Right lobe of liver (tissue), 6 donors: ENCODE measurements at regions of chr3 and their contacts with region 1.

Region 1: GRCh38 chr3:14915636-14916222 is 31.7 kb upstream of the NR2C2 start:
- DNase-seq: peak in 1 of 3 donors; percentile 42
- ATAC-seq: peak; percentile 33 to 56 (median 40)
- H3K4me3 ChIP-seq: no peak overlapping the region
- H3K27ac ChIP-seq: peak overlapping the region in 1 of 3 donors; percentile 20
- H3K4me1 ChIP-seq: peaks cover 0 to 13% (median 6%) of the 10 kb centered on the region in 4 donors
- H3K27me3 ChIP-seq: no peaks in the 10 kb centered on the region
- CTCF ChIP-seq: peak in 3 of 4 donors; percentile 26 to 36 (median 29)
- POLR2A ChIP-seq: no peak

Region 2: GRCh38 chr3:14678015-14678503 is 237.7 kb before region 1 on chr3:
- intact Hi-C with region 1: loop called in 1 of 2 experiments (anchors 10 kb)
- DNase-seq: peak in 2 of 3 donors; percentile 67 to 70
- ATAC-seq: peak; percentile 72 to 83 (median 78)
- H3K4me3 ChIP-seq: no peak overlapping the region
- H3K27ac ChIP-seq: no peak overlapping the region
- H3K4me1 ChIP-seq: peaks cover 0 to 10% (median 3%) of the 10 kb centered on the region in 4 donors
- H3K27me3 ChIP-seq: no peaks in the 10 kb centered on the region
- CTCF ChIP-seq: peak in 2 of 4 donors; percentile 5 to 6
- POLR2A ChIP-seq: no peak

Region 3: DNA sequence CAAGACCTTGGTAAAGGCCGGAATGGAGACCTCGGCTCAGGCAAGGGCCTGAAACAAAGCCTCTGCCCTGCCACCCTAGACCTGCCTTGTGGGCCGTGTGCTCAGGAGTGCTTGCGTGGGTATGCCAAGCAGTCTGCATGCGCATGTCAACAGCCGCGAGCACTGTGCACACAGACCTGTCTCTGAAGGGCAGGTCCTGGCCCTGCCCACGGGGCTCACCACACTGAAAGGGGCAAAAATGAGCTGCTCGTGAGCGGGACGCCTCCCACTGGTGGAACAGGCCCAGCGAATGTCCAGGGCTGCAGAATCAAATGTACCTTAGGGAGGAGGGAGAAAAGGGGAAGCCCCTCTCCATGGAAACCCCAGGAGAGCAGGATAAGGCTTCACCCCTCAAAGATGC is 141.3 kb before region 1 on chr3:
- intact Hi-C with region 1: no loop called
- DNase-seq: peak in 2 of 3 donors; percentile 32 to 33
- ATAC-seq: no peak
- H3K4me3 ChIP-seq: no peak overlapping the region
- H3K27ac ChIP-seq: no peak overlapping the region
- H3K4me1 ChIP-seq: no peaks in the 10 kb centered on the region
- H3K27me3 ChIP-seq: no peaks in the 10 kb centered on the region
- CTCF ChIP-seq: no peak
- POLR2A ChIP-seq: no peak

Region 4: GRCh38 chr3:14791343-14791945 is 124.3 kb before region 1 on chr3:
- intact Hi-C with region 1: loop called (anchors 5 to 10 kb)
- DNase-seq: peak; percentile 73 to 85 (median 77)
- ATAC-seq: peak; percentile 90 to 96 (median 90)
- H3K4me3 ChIP-seq: no peak overlapping the region
- H3K27ac ChIP-seq: no peak overlapping the region
- H3K4me1 ChIP-seq: no peaks in the 10 kb centered on the region
- H3K27me3 ChIP-seq: no peaks in the 10 kb centered on the region
- CTCF ChIP-seq: peak; percentile 70 to 83 (median 78)
- POLR2A ChIP-seq: no peak

Region 5: DNA sequence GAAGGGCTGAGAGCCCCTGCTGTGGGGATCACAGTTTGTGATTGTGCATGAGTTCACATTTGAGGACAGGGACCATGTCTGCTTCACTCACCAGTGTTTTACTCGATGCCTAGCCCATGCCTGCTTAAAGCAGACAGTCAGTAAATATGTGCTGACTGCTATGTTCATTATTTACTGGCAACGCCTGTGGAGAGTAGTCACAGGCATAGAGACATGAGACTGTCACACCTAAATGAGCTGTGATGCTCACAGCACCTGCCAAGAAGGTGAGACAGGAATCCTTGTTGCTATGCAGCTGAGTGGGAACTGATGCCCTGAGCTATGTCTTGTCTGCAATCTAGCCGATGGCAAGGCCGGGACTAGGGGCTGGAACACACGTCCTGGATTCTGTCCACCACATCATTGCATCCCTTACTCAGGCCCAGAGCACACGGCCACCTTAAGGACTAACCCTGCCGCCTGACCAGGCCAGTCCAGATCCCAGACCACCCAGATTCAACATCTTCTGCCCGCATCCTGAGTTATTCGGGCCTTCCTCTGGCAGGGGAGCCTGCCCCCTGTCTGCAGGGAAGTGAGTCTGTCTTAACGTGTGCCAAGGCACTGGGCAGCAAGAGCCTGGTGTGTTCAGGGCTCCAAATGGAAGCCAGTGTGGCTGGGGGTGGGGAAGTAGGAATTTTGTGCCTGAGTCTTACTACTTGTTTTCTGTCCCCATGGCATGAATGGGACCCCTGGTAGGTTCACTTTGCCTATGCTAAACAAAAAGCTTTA is 52.2 kb before region 1 on chr3:
- intact Hi-C with region 1: loop called in 1 of 2 experiments (anchors 10 kb)
- DNase-seq: no peak
- ATAC-seq: peak in 1 of 4 donors; percentile 25
- H3K4me3 ChIP-seq: no peak overlapping the region
- H3K27ac ChIP-seq: no peak overlapping the region
- H3K4me1 ChIP-seq: peaks cover 0 to 5% (median 0%) of the 10 kb centered on the region in 4 donors
- H3K27me3 ChIP-seq: no peaks in the 10 kb centered on the region
- CTCF ChIP-seq: peak in 2 of 4 donors; percentile 11 to 25
- POLR2A ChIP-seq: no peak